Activated naive CD4-positive, alpha-beta T cell treated with anti-CD3 and anti-CD28 coated beads, Interleukin-2, amount 10 ng/mL, durations not matched to agents 7 days and 5 days (primary cell): ENCODE measurements at regions of chr15 and their contacts with region 1.

Region 1: GRCh38 chr15:68304589-68305337 is 27.2 kb downstream of the FEM1B start:
- DNase-seq: no peak
- H3K4me3 Mint-ChIP-seq: no peak overlapping the region
- H3K27ac Mint-ChIP-seq: no peak overlapping the region
- H3K4me1 Mint-ChIP-seq: peaks cover 19% of the 10 kb centered on the region
- H3K27me3 Mint-ChIP-seq: peaks cover 43% of the 10 kb centered on the region

Region 2: DNA sequence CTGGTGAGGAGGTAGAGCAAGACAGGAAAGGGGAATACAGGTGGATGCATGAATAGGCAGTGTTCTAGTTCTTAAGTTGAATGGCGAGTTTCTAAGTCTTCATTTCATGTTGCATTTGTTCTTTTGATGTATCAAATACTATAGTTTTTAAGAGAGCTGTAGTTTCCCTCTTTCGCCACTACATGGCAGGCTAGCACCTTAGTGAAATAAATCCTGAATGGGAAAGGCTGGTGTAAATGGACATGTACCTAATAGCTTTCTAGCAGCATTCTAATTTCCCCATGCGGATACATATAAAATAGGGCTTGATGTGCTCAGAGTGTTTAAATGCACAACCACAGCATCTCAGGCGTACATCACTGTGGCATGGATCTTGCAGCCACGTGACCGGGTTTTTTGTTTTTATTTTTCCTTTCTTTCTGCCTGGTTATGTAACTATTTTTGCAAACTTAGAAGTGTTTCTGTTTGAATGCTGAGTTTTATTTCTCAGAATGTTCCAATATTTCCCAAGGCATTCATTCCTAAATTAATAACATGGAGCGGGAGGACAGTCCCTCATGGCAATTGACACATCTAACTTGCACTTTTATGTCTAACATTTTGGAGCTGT is 51.7 kb before region 1 on chr15:
- CTCF ChIA-PET with region 1: interaction called, 86 read pairs
- DNase-seq: peak; percentile 57
- H3K4me3 Mint-ChIP-seq: no peak overlapping the region
- H3K27ac Mint-ChIP-seq: no peak overlapping the region
- H3K4me1 Mint-ChIP-seq: peaks cover 2% of the 10 kb centered on the region
- H3K27me3 Mint-ChIP-seq: peaks cover 49% of the 10 kb centered on the region

Region 3: GRCh38 chr15:68292157-68292781 is 12.5 kb before region 1 on chr15:
- CTCF ChIA-PET with region 1: interaction called, 15 read pairs
- DNase-seq: no peak
- H3K4me3 Mint-ChIP-seq: no peak overlapping the region
- H3K27ac Mint-ChIP-seq: no peak overlapping the region
- H3K4me1 Mint-ChIP-seq: peaks cover 27% of the 10 kb centered on the region
- H3K27me3 Mint-ChIP-seq: no peaks in the 10 kb centered on the region

Region 4: DNA sequence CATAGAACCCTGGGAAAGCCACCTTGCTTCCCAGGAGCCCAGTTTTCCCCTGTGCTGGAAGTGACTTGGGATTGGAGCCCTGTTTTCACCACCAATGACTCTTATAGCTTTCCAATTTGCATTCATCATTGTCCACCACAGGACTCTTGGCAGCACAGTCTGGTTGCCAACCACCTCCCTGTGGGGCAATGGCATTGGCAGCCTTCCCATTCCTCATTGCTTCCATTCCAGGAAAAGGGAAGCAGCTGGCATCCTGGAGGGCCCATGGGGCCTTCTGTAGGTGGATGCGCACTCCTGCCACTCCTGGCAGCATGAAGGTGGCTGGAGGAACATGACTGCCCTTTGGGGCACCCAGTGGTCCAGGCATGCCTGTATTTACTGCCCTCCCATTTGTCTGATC is 30.5 kb after region 1 on chr15:
- CTCF ChIA-PET with region 1: interaction called, 12 read pairs
- DNase-seq: no peak
- H3K4me3 Mint-ChIP-seq: no peak overlapping the region
- H3K27ac Mint-ChIP-seq: no peak overlapping the region
- H3K4me1 Mint-ChIP-seq: peaks cover 5% of the 10 kb centered on the region
- H3K27me3 Mint-ChIP-seq: peaks cover 61% of the 10 kb centered on the region

Region 5: GRCh38 chr15:68365140-68365745 is 60.5 kb after region 1 on chr15:
- CTCF ChIA-PET with region 1: interaction called, 12 read pairs
- DNase-seq: peak; percentile 26
- H3K4me3 Mint-ChIP-seq: peak overlapping the region; percentile 39
- H3K27ac Mint-ChIP-seq: peak overlapping the region; percentile 4
- H3K4me1 Mint-ChIP-seq: peaks cover 25% of the 10 kb centered on the region
- H3K27me3 Mint-ChIP-seq: peaks cover 39% of the 10 kb centered on the region

Region 6: DNA sequence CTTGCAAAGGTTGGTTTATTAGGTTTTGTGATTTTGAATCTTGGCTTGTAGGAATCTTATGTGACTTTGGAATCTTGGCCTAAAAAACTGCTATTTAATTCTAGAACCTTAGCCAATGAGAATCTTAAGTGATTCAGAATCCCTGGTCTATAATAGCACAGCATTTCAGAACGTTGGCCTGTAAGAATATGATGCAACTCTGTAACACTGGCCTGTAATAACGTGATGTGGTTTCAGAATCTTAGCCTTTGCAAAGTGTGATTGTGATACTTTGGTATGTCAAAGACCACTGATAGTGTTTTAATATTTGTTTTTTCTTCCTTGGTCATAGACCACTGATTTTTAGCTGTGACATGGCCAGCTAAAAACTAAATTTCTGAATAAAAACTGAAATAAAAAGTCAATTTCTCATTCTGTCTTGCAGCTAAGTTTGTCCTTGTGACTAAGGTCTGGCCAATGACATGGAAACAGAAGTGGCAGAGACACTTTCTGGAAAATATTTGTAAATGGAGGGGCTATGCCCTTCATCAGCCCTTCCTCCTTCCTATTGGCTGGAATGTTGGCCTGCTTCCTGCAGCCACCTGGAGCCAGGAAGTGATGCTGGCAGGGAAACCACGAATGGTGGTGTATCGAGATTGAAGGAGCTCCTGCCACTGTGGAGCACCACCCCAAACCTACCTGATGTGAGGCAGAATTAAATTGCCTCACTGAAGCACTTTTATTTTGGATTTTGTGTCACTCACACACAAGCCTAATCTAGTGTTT is 231.8 kb after region 1 on chr15:
- CTCF ChIA-PET with region 1: interaction called, 11 read pairs
- DNase-seq: no peak
- H3K4me3 Mint-ChIP-seq: no peak overlapping the region
- H3K27ac Mint-ChIP-seq: no peak overlapping the region
- H3K4me1 Mint-ChIP-seq: no peaks in the 10 kb centered on the region
- H3K27me3 Mint-ChIP-seq: peaks cover 25% of the 10 kb centered on the region

Region 7: DNA sequence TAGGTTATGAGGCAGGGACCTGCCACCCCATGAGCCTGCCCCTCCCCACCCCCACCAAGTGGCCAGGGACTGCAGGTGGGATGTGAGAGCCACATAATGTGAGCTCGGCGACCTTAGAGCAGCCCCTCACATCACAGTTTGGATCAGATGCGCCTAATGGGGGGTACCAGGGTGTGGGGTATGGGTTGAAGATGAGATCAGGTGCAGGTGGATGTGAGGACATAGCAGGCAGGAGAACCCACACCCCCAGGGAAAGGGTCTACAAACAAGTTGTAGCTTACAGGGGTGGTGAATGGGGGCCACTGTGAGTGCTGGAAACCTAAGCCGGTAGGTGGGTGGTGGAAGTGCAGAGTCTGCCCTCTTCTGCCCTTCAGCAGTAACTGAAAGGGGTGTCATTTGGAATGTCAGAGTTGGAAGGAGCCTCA is 368.0 kb after region 1 on chr15:
- CTCF ChIA-PET with region 1: interaction called, 16 read pairs
- DNase-seq: no peak
- H3K4me3 Mint-ChIP-seq: no peak overlapping the region
- H3K27ac Mint-ChIP-seq: no peak overlapping the region
- H3K4me1 Mint-ChIP-seq: no peaks in the 10 kb centered on the region
- H3K27me3 Mint-ChIP-seq: peaks cover 27% of the 10 kb centered on the region